ENCODE measurements at regions of chr6 and their contacts with region 1.

Region 1: GRCh38 chr6:4264086-4264485 is 128.7 kb upstream of the ECI2 start:
- DNase-seq: no peak
- ATAC-seq: no peak
- H3K4me3 ChIP-seq: no peak overlapping the region
- H3K27ac ChIP-seq: no peak overlapping the region
- H3K4me1 ChIP-seq: no peaks in the 10 kb centered on the region; the same call in 1 of the 2 replicates
- H3K27me3 ChIP-seq: peaks cover 11% of the 10 kb centered on the region
- CTCF ChIP-seq: no peak
- POLR2A ChIP-seq: no peak
- RAD21 ChIP-seq: no peak

Region 2: GRCh38 chr6:4253604-4254231 is 10.4 kb before region 1 on chr6:
- CTCF ChIA-PET with region 1: interaction called, 10 read pairs
- POLR2A ChIA-PET with region 1: no interaction called
- dilution Hi-C with region 1: no loop called
- in situ Hi-C with region 1: no loop called
- intact Hi-C with region 1: no loop called
- DNase-seq: peak; percentile 83
- ATAC-seq: peak; percentile 94
- H3K4me3 ChIP-seq: no peak overlapping the region
- H3K27ac ChIP-seq: peak overlapping the region; percentile 53
- H3K4me1 ChIP-seq: peaks cover 13% of the 10 kb centered on the region
- H3K27me3 ChIP-seq: no peaks in the 10 kb centered on the region
- CTCF ChIP-seq: peak; percentile 69
- POLR2A ChIP-seq: no peak
- RAD21 ChIP-seq: peak; percentile 38

Region 3: GRCh38 chr6:4577406-4577805 is 313.3 kb after region 1 on chr6:
- CTCF ChIA-PET with region 1: no interaction called
- POLR2A ChIA-PET with region 1: no interaction called
- dilution Hi-C with region 1: no loop called
- in situ Hi-C with region 1: no loop called
- intact Hi-C with region 1: no loop called
- DNase-seq: peak; percentile 99
- ATAC-seq: peak; percentile 55
- H3K4me3 ChIP-seq: no peak overlapping the region
- H3K27ac ChIP-seq: peak overlapping the region; percentile 69; the same call in 1 of the 2 replicates
- H3K4me1 ChIP-seq: peaks cover 15% of the 10 kb centered on the region
- H3K27me3 ChIP-seq: no peaks in the 10 kb centered on the region
- CTCF ChIP-seq: no peak
- POLR2A ChIP-seq: no peak
- RAD21 ChIP-seq: peak; percentile 28; the same call in 1 of the 2 replicates